Right ventricle myocardium inferior (tissue), 1 donor: ENCODE measurements at regions of chr11 and their contacts with region 1.

Region 1: DNA sequence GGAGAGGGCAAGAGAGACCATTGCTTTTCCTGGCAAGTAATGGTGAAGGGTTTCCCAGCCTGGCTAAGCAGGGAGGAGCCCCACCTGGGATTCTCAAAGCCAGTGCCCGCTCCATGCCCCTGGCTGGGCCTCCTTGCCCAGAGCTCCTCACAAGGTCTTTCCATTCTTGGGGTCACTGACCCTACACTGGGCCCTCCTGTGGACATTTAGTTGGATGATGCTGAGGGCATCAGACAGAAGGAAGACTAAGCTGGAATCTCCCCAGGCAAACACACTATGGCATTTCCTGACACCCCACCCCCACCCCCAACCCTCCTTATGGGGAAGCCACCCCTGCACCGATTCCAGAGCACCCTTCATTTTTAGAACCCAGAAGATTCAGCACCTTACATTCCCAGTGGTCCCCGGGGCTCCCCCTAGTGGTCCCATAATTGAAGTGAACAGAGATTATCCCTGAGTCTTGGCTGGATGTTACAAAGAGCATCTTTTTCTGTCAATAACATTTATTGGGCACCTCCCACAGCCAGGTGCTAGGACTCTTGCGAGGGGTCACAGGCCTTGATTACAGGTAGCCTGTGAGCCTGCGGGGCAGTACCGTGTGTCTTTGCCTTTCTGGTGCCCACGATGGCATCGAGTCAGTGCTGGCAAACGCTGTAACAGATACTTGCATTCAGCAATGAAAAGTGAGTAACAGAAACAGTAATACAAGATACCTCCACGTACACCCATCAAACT is 548.5 kb downstream of the BUD13 start:
- DNase-seq: no peak
- ATAC-seq: no peak

Region 2: GRCh38 chr11:115990004-115990447 is 234.3 kb before region 1 on chr11:
- intact Hi-C with region 1: loop called (anchors 5 kb)
- DNase-seq: no peak
- ATAC-seq: peak; percentile 67

Region 3: DNA sequence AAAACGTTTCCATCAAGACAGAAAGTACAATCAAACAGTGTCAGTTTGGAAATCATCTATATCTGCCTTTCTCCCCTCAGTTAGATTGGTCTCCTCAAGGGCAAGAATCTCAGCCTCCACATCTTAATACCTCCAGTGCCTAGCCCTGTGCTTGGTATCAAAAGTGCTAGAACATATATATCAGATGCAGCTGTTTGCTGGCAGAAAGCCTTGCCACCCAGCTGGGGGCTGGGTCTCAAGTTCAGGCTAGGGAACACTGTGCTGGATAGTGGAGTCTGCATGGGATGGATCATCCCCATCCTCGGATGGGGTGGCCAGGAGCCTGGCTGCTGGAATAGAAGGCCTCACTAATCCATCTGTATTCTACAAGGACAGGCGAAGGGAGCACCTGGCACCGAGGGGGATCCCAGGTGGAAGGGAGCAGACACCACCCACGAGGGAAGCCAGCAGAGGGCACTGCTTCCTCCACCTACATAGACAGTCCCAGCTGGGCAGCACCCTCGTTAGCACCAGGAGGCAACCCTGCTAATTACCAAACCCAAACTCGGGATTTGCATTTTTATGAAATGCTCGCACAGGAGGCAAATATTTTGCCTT is 53.7 kb before region 1 on chr11:
- intact Hi-C with region 1: no loop called
- DNase-seq: no peak
- ATAC-seq: no peak